Mammary epithelial cell (primary cell): ENCODE measurements at regions of chr11 and their contacts with region 1.

Region 1: DNA sequence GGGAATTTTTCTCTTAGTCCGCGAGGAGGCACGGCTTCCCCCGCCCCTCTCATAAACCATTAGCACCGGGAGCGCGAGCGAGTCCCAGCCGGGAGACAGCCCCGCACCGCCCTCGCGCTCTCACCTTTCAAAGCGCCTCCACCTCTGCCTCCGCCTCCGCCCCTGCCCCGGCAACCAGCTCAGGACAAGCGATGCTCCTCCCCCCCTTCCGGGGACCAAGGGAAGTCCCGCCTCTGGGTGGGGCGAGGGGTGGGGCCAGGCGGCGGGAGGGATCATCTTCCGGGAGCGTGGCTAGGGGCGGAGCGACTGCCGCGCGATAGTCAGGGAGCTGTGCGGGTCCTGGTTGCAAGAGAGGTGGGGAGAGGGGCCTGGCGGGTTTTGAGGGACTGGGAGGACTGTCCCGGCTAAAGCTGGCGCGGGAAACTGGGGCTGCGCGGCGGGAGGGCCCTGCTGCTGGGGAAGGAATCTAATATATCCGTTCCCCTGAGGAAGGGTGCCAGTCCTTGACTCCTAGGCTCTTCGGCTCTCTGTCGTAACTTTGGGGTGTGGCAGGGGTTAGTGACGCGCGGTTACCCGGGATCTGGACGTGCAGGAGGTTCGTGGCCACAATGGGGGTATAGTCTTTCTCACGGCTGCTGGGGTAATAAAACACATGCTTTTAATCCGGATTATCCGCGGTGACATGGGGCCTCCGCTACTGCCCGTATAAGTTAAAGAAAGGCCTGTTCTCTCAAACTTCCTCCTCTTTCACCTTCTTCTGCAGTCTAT is at the starts of genes CCDC82 and JRKL:
- DNase-seq: peak; percentile 97
- H3K4me3 ChIP-seq: peak within 1 kb of the TSS; percentile 73 to 97 (median 93)
- H3K27ac ChIP-seq: peak within 1 kb of the TSS; percentile 90
- H3K4me1 ChIP-seq: peaks cover 14% of the 10 kb centered on the region
- H3K27me3 ChIP-seq: no peaks in the 10 kb centered on the region
- CTCF ChIP-seq: no peak
- total RNA-seq, gene CCDC82: 14.3 to 17.9 TPM
- total RNA-seq, gene JRKL: 7.2 to 9.6 TPM

Region 2: DNA sequence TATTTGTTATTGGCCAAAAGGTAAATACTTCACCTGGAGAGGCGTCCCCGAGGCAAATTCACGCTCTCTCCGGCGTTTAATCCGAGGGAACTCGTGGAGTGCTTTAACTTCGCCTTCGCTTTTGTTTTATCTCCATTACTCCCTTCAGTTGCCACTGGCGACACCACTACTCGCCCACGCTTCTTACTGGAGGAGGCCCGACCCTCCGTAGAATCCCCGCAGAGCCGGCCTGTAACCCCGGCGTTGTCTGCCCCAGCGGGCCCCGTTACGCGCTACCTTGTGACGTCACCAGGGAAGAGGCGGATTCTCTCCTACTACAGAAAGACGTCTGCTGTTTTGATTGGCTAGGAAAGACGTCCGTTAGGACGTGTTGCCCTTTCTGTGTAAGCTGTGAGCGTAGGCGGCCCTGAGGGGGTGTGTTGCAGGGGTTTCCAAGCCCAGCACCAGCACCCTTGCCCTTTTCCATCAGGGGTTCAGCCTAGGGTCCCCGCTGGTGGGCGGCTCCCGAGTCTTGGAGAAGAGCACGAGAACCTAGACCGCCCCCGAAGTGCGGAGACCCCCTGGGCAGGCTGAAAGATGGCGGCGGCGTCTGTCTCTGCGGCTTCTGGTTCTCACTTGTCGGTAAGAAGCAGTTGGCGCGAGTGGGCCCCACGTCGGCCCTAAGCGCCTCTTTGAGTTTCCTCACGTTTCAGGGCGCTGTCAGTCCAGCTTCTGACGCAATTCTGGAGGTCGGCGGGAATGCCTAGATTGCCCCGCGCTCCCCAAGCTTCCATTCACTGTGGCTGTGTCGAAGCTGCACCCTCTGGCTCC is 599.6 kb before region 1 on chr11 and contains the start of gene CEP57:
- CTCF ChIA-PET with region 1: interaction called, 5 read pairs
- dilution Hi-C with region 1: no loop called
- in situ Hi-C with region 1: no loop called
- intact Hi-C with region 1: loop called (anchors 1 kb)
- DNase-seq: peak; percentile 97
- H3K4me3 ChIP-seq: peak within 1 kb of the TSS; percentile 73 to 98 (median 81)
- H3K27ac ChIP-seq: peak within 1 kb of the TSS; percentile 92
- H3K4me1 ChIP-seq: peaks cover 19% of the 10 kb centered on the region
- H3K27me3 ChIP-seq: no peaks in the 10 kb centered on the region
- CTCF ChIP-seq: no peak
- total RNA-seq, gene CEP57: 25.2 to 46.8 TPM

Region 3: GRCh38 chr11:95835768-95836488 is 554.0 kb before region 1 on chr11:
- CTCF ChIA-PET with region 1: no interaction called
- dilution Hi-C with region 1: no loop called
- in situ Hi-C with region 1: loop called in 1 of 2 experiments (anchors 25 kb)
- intact Hi-C with region 1: loop called (anchors 1 kb)
- DNase-seq: peak; percentile 81
- H3K4me3 ChIP-seq: no peak overlapping the region
- H3K27ac ChIP-seq: peak overlapping the region; percentile 14
- H3K4me1 ChIP-seq: no peaks in the 10 kb centered on the region
- H3K27me3 ChIP-seq: no peaks in the 10 kb centered on the region
- CTCF ChIP-seq: peak; percentile 93 to 98

Region 4: DNA sequence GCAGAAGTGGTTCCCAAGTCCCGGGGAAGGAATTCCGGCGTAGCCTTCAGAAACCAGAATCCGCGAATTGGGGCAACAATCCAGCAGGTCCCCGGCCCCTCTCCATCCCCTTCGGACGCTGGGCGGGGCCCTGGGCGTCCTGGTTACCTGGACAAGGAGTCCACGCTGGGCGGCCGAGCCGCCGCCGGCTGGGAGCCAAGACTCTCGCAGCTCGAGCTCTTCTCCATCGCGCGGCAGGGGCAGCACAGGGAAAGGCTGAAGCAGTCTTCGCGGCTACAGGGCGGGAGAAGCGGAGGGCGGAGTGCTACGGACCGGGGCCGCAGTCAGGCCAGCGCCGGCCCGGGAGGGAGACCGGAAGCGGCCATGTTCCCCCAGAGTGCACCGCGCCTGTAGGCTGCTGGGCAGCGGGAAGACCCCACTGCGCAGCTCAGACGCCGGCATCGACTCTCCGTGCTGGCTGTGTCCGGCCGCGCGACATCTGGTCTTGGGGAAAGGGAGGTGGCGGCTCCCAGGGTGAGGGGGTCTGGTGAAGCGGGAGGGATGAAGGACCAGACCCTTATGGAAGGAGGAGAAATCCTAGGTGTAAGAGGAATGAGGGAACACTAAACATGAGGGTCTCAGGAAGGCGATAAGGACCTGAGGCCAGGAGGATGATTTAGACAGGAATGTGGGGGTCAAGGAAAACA is 466.0 kb before region 1 on chr11 and contains the start of gene MTMR2:
- CTCF ChIA-PET with region 1: no interaction called
- dilution Hi-C with region 1: loop called (anchors 10 kb)
- in situ Hi-C with region 1: no loop called
- intact Hi-C with region 1: no loop called
- DNase-seq: peak; percentile 66
- H3K4me3 ChIP-seq: peak within 1 kb of the TSS; percentile 69 to 98 (median 70)
- H3K27ac ChIP-seq: peak within 1 kb of the TSS; percentile 90
- H3K4me1 ChIP-seq: peaks cover 8% of the 10 kb centered on the region
- H3K27me3 ChIP-seq: no peaks in the 10 kb centered on the region
- CTCF ChIP-seq: peak in 1 of 2 donors; percentile 2
- total RNA-seq, gene MTMR2: 47.2 to 50.7 TPM

Region 5: GRCh38 chr11:96054870-96055705 is 334.8 kb before region 1 on chr11:
- CTCF ChIA-PET with region 1: no interaction called
- dilution Hi-C with region 1: no loop called
- in situ Hi-C with region 1: no loop called
- intact Hi-C with region 1: loop called (anchors 5 kb)
- DNase-seq: peak; percentile 35
- H3K4me3 ChIP-seq: no peak overlapping the region
- H3K27ac ChIP-seq: no peak overlapping the region
- H3K4me1 ChIP-seq: peaks cover 33% of the 10 kb centered on the region
- H3K27me3 ChIP-seq: no peaks in the 10 kb centered on the region
- CTCF ChIP-seq: peak; percentile 58 to 67